GM12878 (cell line): ENCODE measurements at regions of chr15 and their contacts with region 1.

Region 1: DNA sequence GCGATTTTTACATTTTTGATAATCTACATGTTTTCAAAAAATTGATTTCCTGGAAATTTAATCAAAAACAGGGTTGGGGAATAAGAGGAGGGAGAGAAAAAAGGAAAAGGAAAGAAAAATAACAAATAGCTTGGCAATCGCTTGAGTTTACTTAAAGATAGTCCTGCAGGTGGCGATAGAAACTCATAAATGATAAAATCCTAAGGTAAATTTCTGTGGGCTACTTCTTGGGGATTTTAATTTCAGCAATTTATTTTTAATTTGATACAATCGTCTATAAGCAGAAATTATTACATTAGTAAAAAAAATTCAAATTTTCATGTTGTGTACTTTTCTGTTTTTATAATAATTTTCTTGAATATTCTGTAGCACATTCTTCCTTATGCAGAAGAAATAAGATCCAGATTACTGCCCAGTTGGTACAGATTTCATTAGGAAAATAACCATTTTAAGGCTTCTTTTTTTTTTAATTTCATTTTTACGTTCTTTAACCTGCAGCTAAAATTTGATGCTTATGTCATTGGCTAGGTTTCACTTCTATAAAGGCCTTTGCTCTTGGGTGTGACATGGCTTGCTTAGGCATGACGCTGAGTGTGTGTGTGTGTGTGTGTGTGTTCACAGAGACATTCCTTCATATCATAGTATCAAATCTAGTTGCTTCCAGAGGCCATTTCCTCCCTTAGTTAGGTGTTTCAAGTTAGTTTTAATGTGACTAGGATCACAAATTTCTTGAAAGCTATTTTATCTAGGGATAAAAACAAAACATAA is 181.8 kb downstream of the MCTP2 start:
- DNase-seq: no peak
- ATAC-seq: peak; percentile 89
- H3K4me3 ChIP-seq: no peak overlapping the region
- H3K27ac ChIP-seq: no peak overlapping the region
- H3K4me1 ChIP-seq: no peaks in the 10 kb centered on the region
- H3K27me3 ChIP-seq: no peaks in the 10 kb centered on the region
- CTCF ChIP-seq: peak in 2 of 3 experiments; percentile 18 to 19; a peak in 1 of 6 replicates
- EP300 ChIP-seq: no peak
- POLR2A ChIP-seq: no peak
- RAD21 ChIP-seq: peak; percentile 30; the same call in 1 of the 2 replicates

Region 2: GRCh38 chr15:94397337-94397736 is 15.8 kb before region 1 on chr15:
- CTCF ChIA-PET with region 1: interaction called, 24 read pairs
- POLR2A ChIA-PET with region 1: no interaction called
- RAD21 ChIA-PET with region 1: interaction called, 3 read pairs
- SMC1A ChIA-PET with region 1: interaction called, 18 read pairs
- in situ Hi-C with region 1: no loop called
- intact Hi-C with region 1: no loop called
- DNase-seq: no peak
- ATAC-seq: no peak
- H3K4me3 ChIP-seq: no peak overlapping the region
- H3K27ac ChIP-seq: no peak overlapping the region
- H3K4me1 ChIP-seq: no peaks in the 10 kb centered on the region
- H3K27me3 ChIP-seq: no peaks in the 10 kb centered on the region
- CTCF ChIP-seq: no peak
- EP300 ChIP-seq: no peak
- POLR2A ChIP-seq: no peak
- RAD21 ChIP-seq: no peak

Region 3: GRCh38 chr15:94467034-94467433 is 53.9 kb after region 1 on chr15:
- CTCF ChIA-PET with region 1: interaction called, 21 read pairs
- POLR2A ChIA-PET with region 1: no interaction called
- RAD21 ChIA-PET with region 1: interaction called, 11 read pairs
- SMC1A ChIA-PET with region 1: interaction called, 16 read pairs
- in situ Hi-C with region 1: no loop called
- intact Hi-C with region 1: no loop called
- DNase-seq: no peak
- ATAC-seq: no peak
- H3K4me3 ChIP-seq: no peak overlapping the region
- H3K27ac ChIP-seq: no peak overlapping the region
- H3K4me1 ChIP-seq: no peaks in the 10 kb centered on the region
- H3K27me3 ChIP-seq: no peaks in the 10 kb centered on the region
- CTCF ChIP-seq: 0 out of 6 replicates have a peak, but pooled peaks of 1 of the 3 experiments have one; percentile 0
- EP300 ChIP-seq: no peak
- POLR2A ChIP-seq: no peak
- RAD21 ChIP-seq: no peak

Region 4: GRCh38 chr15:94576889-94577533 is 163.8 kb after region 1 on chr15:
- CTCF ChIA-PET with region 1: interaction called, 4 read pairs
- POLR2A ChIA-PET with region 1: no interaction called
- RAD21 ChIA-PET with region 1: interaction called, 3 read pairs
- SMC1A ChIA-PET with region 1: interaction called, 3 read pairs
- in situ Hi-C with region 1: no loop called
- intact Hi-C with region 1: loop called (anchors 5 kb)
- DNase-seq: no peak
- ATAC-seq: peak; percentile 94
- H3K4me3 ChIP-seq: no peak overlapping the region
- H3K27ac ChIP-seq: no peak overlapping the region
- H3K4me1 ChIP-seq: no peaks in the 10 kb centered on the region
- H3K27me3 ChIP-seq: no peaks in the 10 kb centered on the region; a peak in 2 of 4 replicates
- CTCF ChIP-seq: peak; percentile 75 to 84 (median 77)
- EP300 ChIP-seq: no peak
- POLR2A ChIP-seq: no peak
- RAD21 ChIP-seq: peak; percentile 62